Heart left ventricle (tissue), 16 donors: ENCODE measurements at regions of chr1 and their contacts with region 1.

Region 1: GRCh38 chr1:227542143-227543120 is 20.9 kb upstream of the ZNF678 start:
- DNase-seq: peak; percentile 87 to 94 (median 91)
- ATAC-seq: peak; percentile 88 to 99 (median 95)
- H3K4me3 ChIP-seq: peak overlapping the region; percentile 53 to 96 (median 78)
- H3K27ac ChIP-seq: peak overlapping the region in 10 of 12 donors; percentile 55 to 87 (median 66)
- H3K4me1 ChIP-seq: peaks cover 0 to 17% (median 11%) of the 10 kb centered on the region in 12 donors
- H3K27me3 ChIP-seq: no peaks in the 10 kb centered on the region
- CTCF ChIP-seq: peak; percentile 88 to 99 (median 99)
- POLR2A ChIP-seq: peak in 1 of 2 donors; percentile 42

Region 2: GRCh38 chr1:227482023-227482299 is 60.5 kb before region 1 on chr1:
- intact Hi-C with region 1: loop called in 5 of 10 experiments (anchors 1 to 10 kb)
- DNase-seq: no peak
- ATAC-seq: no peak
- H3K4me3 ChIP-seq: no peak overlapping the region
- H3K27ac ChIP-seq: no peak overlapping the region
- H3K4me1 ChIP-seq: no peaks in the 10 kb centered on the region
- H3K27me3 ChIP-seq: peaks cover 0 to 14% (median 0%) of the 10 kb centered on the region in 9 donors
- CTCF ChIP-seq: no peak
- POLR2A ChIP-seq: no peak

Region 3: DNA sequence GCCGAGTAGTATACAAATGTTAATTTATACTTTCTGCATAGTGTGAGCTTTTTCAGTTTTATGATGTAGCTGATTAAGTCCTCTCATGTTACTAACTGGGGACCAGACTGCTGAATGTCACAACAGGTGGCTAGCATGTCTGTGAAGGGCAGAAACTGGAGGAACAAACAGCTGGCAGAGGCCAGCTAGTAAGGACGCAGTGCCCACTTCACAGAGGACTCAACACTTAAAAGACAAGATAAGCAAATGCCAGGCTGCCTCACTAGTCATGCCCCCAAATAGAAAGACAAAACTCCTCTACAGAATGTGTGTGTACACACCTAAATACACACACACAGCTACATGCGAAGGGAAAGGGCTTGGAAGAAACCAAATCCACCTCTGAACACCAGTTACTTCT is 52.9 kb before region 1 on chr1:
- intact Hi-C with region 1: loop called in 3 of 10 experiments (anchors 1 to 10 kb)
- DNase-seq: peak in 2 of 5 donors; percentile 44 to 59
- ATAC-seq: peak; percentile 87 to 95 (median 92)
- H3K4me3 ChIP-seq: no peak overlapping the region
- H3K27ac ChIP-seq: peak overlapping the region in 1 of 12 donors; percentile 37
- H3K4me1 ChIP-seq: peaks cover 0 to 16% (median 1%) of the 10 kb centered on the region in 12 donors
- H3K27me3 ChIP-seq: no peaks in the 10 kb centered on the region
- CTCF ChIP-seq: no peak
- POLR2A ChIP-seq: no peak

Region 4: GRCh38 chr1:227563324-227564201 is 21.1 kb after region 1 on chr1 and contains the start of gene ZNF678:
- intact Hi-C with region 1: loop called in 2 of 10 experiments (anchors 1 kb)
- DNase-seq: peak; percentile 92 to 95 (median 93)
- ATAC-seq: peak; percentile 96 to 98 (median 98)
- H3K4me3 ChIP-seq: peak within 1 kb of the TSS; percentile 40 to 90 (median 77)
- H3K27ac ChIP-seq: peak within 1 kb of the TSS; percentile 30 to 93 (median 86)
- H3K4me1 ChIP-seq: peaks cover 0 to 28% (median 8%) of the 10 kb centered on the region in 12 donors
- H3K27me3 ChIP-seq: peaks cover 6 to 33% (median 27%) of the 10 kb centered on the region in 9 donors
- CTCF ChIP-seq: no peak
- POLR2A ChIP-seq: peak in 1 of 2 donors; percentile 36
- total RNA-seq, gene ZNF678: 2.2 to 6.0 (median 3.3) TPM

Region 5: GRCh38 chr1:227728059-227728891 is 185.8 kb after region 1 on chr1:
- intact Hi-C with region 1: loop called in 2 of 10 experiments (anchors 5 to 10 kb)
- DNase-seq: peak; percentile 79 to 89 (median 85)
- ATAC-seq: peak; percentile 35 to 63 (median 62)
- H3K4me3 ChIP-seq: peak overlapping the region; percentile 24 to 86 (median 64)
- H3K27ac ChIP-seq: peak overlapping the region; percentile 33 to 89 (median 80)
- H3K4me1 ChIP-seq: peaks cover 0 to 37% (median 24%) of the 10 kb centered on the region in 12 donors
- H3K27me3 ChIP-seq: no peaks in the 10 kb centered on the region
- CTCF ChIP-seq: no peak
- POLR2A ChIP-seq: no peak

Region 6: GRCh38 chr1:227946624-227947385 is 404.4 kb after region 1 on chr1:
- intact Hi-C with region 1: loop called in 1 of 10 experiments (anchors 5 kb)
- DNase-seq: peak; percentile 75 to 84 (median 78)
- ATAC-seq: peak; percentile 59 to 79 (median 72)
- H3K4me3 ChIP-seq: peak overlapping the region; percentile 26 to 73 (median 59)
- H3K27ac ChIP-seq: peak overlapping the region in 10 of 12 donors; percentile 34 to 95 (median 89)
- H3K4me1 ChIP-seq: peaks cover 0 to 57% (median 32%) of the 10 kb centered on the region in 12 donors
- H3K27me3 ChIP-seq: peaks cover 0 to 29% (median 0%) of the 10 kb centered on the region in 9 donors
- CTCF ChIP-seq: peak; percentile 62 to 90 (median 82)
- POLR2A ChIP-seq: no peak

Region 7: DNA sequence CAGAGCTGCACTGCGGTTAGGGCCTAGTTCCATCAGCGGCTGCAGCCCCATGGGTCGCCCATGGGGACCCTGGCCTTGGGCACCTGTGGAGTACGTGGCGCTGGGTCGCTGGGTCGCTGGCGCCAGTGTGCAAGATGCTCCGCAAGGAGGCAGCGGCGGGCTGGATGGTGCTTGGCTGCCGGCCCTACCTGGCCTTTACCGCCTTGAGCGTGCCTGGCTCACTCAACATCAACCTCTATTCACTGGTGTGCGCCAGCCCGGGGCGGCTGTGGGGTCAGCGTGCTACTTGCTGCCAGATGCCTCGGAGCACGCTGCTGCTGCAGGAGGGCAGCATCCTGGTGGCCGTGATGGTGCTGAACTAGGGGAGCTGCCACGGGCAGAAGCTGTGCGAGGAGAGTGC is 1107.7 kb after region 1 on chr1:
- intact Hi-C with region 1: no loop called
- DNase-seq: peak in 2 of 5 donors; percentile 23 to 59
- ATAC-seq: no peak
- H3K4me3 ChIP-seq: no peak overlapping the region
- H3K27ac ChIP-seq: no peak overlapping the region
- H3K4me1 ChIP-seq: peaks cover 4 to 21% (median 18%) of the 10 kb centered on the region in 12 donors
- H3K27me3 ChIP-seq: peaks cover 33 to 83% (median 72%) of the 10 kb centered on the region in 9 donors
- CTCF ChIP-seq: no peak
- POLR2A ChIP-seq: no peak